Right cardiac atrium (tissue), 5 donors: ENCODE measurements at regions of chr2 and their contacts with region 1.

Region 1: GRCh38 chr2:42878581-42878980 is 86.2 kb upstream of the HAAO start:
- DNase-seq: no peak
- ATAC-seq: no peak
- H3K4me3 ChIP-seq: no peak overlapping the region
- H3K27ac ChIP-seq: peak overlapping the region; percentile 83
- H3K4me1 ChIP-seq: peaks cover 21% of the 10 kb centered on the region
- H3K27me3 ChIP-seq: no peaks in the 10 kb centered on the region

Region 2: GRCh38 chr2:42922790-42923579 is 44.4 kb after region 1 on chr2:
- intact Hi-C with region 1: loop called in 1 of 4 experiments (anchors 5 kb)
- DNase-seq: peak in 2 of 3 donors; percentile 53 to 62
- ATAC-seq: no peak
- H3K4me3 ChIP-seq: no peak overlapping the region
- H3K27ac ChIP-seq: peak overlapping the region; percentile 97
- H3K4me1 ChIP-seq: peaks cover 43% of the 10 kb centered on the region
- H3K27me3 ChIP-seq: no peaks in the 10 kb centered on the region